Sciatic nerve (tissue), 2 donors: ENCODE measurements at regions of chr13 and their contacts with region 1.

Region 1: GRCh38 chr13:83265279-83265678 is 617.0 kb downstream of the SLITRK1 start:
- DNase-seq: no peak
- ATAC-seq: no peak

Region 2: DNA sequence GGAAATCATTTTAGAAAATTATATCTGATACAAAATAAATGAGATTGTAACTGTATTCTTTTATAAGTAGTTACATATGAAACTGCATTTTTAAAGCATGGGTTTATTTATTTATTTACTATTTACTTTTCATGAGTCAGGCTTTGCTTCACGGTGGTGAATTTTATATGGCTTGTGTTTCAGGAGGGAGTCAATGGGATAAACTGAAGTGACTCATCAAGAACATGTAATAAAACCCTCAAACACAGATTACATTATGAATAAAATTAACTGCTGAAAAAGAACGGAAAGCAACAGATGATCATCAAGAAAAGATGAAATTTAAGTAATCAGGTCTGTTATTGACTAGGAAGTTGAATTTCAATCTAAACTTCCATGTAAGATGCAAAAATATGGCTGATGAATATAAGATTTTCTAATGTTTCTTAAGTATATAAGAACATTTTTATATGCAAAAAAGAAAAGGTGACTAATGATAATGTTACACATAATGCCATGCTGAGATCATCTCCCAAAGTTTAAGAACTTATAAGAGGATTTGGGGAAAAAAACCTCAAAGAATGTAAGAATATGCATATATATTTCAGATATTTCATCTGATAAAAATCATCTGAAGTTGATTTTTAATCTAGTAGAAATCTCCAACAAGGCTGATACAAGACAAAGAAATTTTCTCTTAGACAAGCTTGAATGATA is 233.4 kb after region 1 on chr13:
- intact Hi-C with region 1: loop called (anchors 10 kb)
- DNase-seq: no peak
- ATAC-seq: no peak